ENCODE measurements at regions of chr14 and their contacts with region 1.

Region 1: DNA sequence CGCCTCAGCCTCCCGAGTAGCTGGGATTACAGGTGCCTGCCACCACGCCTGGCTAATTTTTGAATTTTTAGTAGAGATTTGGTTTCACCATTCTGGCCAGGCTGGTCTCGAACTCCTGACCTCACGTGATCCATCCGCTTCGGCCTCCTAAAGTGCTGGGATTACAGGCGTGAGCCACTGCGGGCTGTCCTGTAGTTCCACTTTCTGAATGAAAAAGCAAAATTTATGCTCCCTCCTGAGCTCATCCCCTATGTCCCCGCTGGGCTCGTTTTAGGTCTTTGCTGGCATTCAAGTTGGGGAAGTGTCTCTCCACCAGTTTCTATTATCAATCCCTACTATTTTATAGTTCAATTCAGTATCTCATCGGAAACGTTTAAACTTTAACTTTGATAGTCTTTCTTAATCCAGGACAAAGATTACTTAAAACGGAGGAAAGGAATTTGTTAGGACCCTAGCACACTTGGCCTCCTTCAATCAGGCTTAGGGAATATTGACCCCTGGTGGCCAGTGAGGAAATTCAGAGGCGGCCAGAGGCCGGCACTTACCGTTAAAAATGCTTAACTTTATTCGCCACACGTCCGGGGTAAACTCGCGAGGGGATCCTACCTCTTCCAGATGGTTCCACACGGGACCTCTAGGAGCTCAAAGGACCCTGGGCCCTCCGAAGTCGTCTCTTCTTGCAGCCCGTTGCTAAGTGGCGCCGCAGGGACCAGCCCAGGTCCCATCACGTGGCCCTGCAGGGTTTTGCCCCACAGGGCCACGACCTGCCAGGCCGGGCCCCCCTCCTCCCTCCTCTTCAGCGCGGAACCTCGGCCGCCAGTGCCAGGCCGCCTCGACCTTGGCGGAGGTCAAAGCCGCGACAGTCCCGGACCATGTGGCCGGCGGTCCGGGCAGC is 11.4 kb upstream of the DNAL1 start:
- DNase-seq: peak; percentile 71
- H3K4me3 ChIP-seq: peak overlapping the region; percentile 42 to 64 (median 58)
- H3K27ac ChIP-seq: no peak overlapping the region
- H3K4me1 ChIP-seq: peaks cover 9% of the 10 kb centered on the region
- H3K27me3 ChIP-seq: no peaks in the 10 kb centered on the region
- CTCF ChIP-seq: peak; percentile 73 to 84
- POLR2A ChIP-seq: no peak

Region 2: DNA sequence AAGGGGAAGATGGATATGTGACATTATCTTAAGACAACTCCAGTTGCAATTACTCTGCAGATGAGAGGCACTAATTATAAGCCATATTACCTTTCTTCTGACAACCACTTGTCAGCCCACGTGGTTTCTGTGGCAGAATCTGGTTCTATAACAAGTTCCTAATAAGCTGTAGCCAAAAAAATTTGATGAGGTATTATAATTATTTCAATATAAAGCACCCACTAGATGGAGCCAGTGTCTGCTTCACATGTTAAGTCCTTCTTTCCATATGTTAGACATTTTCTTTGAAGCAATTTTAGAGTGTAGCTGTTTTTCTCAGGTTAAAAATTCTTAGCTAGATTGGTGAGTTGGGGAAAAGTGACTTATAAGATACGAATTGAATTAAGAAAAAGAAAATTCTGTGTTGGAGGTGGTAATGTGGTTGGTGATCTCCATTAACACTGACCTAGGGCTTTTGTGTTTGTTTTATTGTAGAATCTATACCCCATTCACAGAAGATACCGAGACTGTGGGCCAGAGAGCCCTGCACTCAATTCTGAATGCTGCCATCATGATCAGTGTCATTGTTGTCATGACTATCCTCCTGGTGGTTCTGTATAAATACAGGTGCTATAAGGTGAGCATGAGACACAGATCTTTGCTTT is 460.1 kb before region 1 on chr14:
- CTCF ChIA-PET with region 1: interaction called, 10 read pairs
- POLR2A ChIA-PET with region 1: no interaction called
- dilution Hi-C with region 1: no loop called
- intact Hi-C with region 1: loop called (anchors 1 kb)
- DNase-seq: peak; percentile 73
- H3K4me3 ChIP-seq: no peak overlapping the region
- H3K27ac ChIP-seq: no peak overlapping the region
- H3K4me1 ChIP-seq: no peaks in the 10 kb centered on the region
- H3K27me3 ChIP-seq: no peaks in the 10 kb centered on the region
- CTCF ChIP-seq: peak; percentile 21 to 25
- POLR2A ChIP-seq: no peak

Region 3: DNA sequence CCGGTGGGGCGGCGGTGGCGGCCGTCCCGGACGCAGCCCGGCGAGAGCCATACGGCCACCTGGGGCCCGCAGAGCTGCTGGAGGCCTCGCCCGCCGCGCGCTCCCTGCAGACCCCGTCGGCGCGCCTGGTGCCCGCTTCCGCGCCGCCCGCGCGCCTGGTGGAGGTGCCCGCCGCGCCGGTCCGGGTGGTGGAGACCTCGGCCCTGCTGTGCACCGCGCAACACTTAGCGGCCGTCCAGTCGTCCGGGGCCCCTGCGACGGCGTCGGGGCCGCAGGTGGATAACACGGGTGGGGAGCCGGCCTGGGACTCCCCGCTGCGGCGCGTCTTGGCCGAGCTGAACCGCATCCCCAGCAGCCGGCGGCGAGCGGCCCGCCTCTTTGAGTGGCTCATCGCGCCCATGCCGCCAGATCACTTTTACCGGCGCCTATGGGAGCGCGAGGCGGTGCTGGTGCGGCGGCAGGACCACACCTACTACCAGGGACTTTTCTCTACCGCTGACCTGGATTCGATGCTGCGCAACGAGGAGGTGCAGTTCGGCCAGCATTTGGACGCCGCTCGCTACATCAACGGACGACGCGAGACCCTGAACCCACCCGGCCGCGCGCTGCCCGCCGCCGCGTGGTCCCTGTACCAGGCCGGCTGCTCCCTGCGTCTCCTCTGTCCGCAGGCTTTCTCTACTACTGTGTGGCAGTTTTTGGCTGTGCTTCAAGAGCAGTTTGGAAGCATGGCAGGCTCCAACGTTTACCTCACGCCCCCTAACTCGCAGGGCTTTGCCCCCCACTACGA is 141.9 kb before region 1 on chr14:
- CTCF ChIA-PET with region 1: interaction called, 8 read pairs
- POLR2A ChIA-PET with region 1: no interaction called
- dilution Hi-C with region 1: no loop called
- intact Hi-C with region 1: loop called (anchors 1 kb)
- DNase-seq: peak; percentile 71
- H3K4me3 ChIP-seq: peak overlapping the region; percentile 37 to 78 (median 65)
- H3K27ac ChIP-seq: peak overlapping the region; percentile 51
- H3K4me1 ChIP-seq: peaks cover 15% of the 10 kb centered on the region
- H3K27me3 ChIP-seq: no peaks in the 10 kb centered on the region
- CTCF ChIP-seq: no peak
- POLR2A ChIP-seq: peak; percentile 9

Region 4: DNA sequence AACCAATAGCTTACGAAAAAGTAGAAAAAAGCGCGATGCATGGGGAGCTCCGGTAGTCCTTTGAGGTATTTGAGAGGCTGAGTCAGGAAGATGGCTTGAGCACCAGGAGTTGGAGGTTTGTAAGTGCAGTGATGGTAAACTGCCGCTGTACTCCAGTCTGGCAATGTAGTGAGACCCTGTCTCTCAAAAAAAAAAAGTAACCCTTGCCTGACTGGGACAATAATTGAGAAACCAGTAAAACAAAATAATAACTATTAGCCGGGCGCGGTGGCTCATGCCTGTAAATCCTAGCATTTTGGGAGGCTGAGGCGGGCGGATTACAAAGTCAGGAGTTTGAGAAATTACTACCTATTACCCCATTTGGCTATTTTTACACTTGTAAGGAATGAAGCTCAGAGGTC is 65.0 kb before region 1 on chr14:
- CTCF ChIA-PET with region 1: interaction called, 13 read pairs
- POLR2A ChIA-PET with region 1: interaction called, 3 read pairs
- dilution Hi-C with region 1: no loop called
- intact Hi-C with region 1: no loop called
- DNase-seq: peak; percentile 4
- H3K4me3 ChIP-seq: peak overlapping the region in 1 of 3 experiments; percentile 54
- H3K27ac ChIP-seq: peak overlapping the region; percentile 95
- H3K4me1 ChIP-seq: peaks cover 19% of the 10 kb centered on the region
- H3K27me3 ChIP-seq: no peaks in the 10 kb centered on the region
- CTCF ChIP-seq: no peak
- POLR2A ChIP-seq: no peak

Region 5: GRCh38 chr14:73862480-73862879 is 229.1 kb after region 1 on chr14:
- CTCF ChIA-PET with region 1: interaction called, 12 read pairs
- POLR2A ChIA-PET with region 1: no interaction called
- dilution Hi-C with region 1: no loop called
- intact Hi-C with region 1: no loop called
- DNase-seq: no peak
- H3K4me3 ChIP-seq: no peak overlapping the region
- H3K27ac ChIP-seq: no peak overlapping the region
- H3K4me1 ChIP-seq: no peaks in the 10 kb centered on the region
- H3K27me3 ChIP-seq: no peaks in the 10 kb centered on the region
- CTCF ChIP-seq: no peak
- POLR2A ChIP-seq: no peak

Measured in endothelial cell of umbilical vein (primary cell).